ENCODE measurements at regions of chr14 and their contacts with region 1.

Region 1: GRCh38 chr14:55051426-55052268 is at the start of gene MAPK1IP1L:
- DNase-seq: peak; percentile 63
- ATAC-seq: peak; percentile 93
- H3K4me3 ChIP-seq: peak within 1 kb of the TSS; percentile 82
- H3K27ac ChIP-seq: peak within 1 kb of the TSS; percentile 99
- H3K4me1 ChIP-seq: no peaks in the 10 kb centered on the region; the same call in 1 of the 2 replicates
- H3K27me3 ChIP-seq: no peaks in the 10 kb centered on the region
- CTCF ChIP-seq: peak; percentile 96 to 99 (median 99); a peak in 5 of 6 replicates
- EP300 ChIP-seq: peak; percentile 37 to 41; a peak in 2 of 4 replicates
- POLR2A ChIP-seq: peak; percentile 100
- RAD21 ChIP-seq: peak; percentile 68
- polyA plus RNA-seq, gene MAPK1IP1L: 55.7 to 66.0 TPM

Region 2: GRCh38 chr14:54955143-54955542 is 96.5 kb before region 1 on chr14:
- CTCF ChIA-PET with region 1: no interaction called
- POLR2A ChIA-PET with region 1: no interaction called
- RAD21 ChIA-PET with region 1: no interaction called
- SMC1A ChIA-PET with region 1: no interaction called
- in situ Hi-C with region 1: no loop called
- intact Hi-C with region 1: no loop called
- DNase-seq: no peak
- ATAC-seq: no peak
- H3K4me3 ChIP-seq: no peak overlapping the region
- H3K27ac ChIP-seq: no peak overlapping the region
- H3K4me1 ChIP-seq: no peaks in the 10 kb centered on the region
- H3K27me3 ChIP-seq: no peaks in the 10 kb centered on the region
- CTCF ChIP-seq: no peak
- EP300 ChIP-seq: no peak
- POLR2A ChIP-seq: no peak
- RAD21 ChIP-seq: no peak

Region 3: DNA sequence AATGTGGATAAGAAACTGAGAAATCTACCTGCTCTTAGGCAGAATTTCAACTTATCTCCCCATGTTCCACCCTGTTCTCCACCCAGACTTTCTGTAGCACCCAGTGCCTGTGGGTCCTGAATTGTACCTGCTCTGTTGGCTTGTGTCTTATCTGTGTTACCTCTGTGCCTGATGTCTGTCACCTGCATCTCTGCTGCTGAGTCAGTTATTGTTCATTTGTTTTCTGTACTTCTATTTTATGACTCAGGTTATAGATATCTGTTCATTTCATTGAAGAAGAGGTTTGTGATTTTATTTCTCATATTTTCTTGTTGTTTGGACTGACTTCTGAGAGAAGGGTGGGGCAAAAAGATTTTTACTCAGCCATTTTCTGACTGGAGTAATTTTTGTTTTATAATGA is 12.9 kb before region 1 on chr14:
- CTCF ChIA-PET with region 1: interaction called, 11 read pairs
- POLR2A ChIA-PET with region 1: interaction called, 6 read pairs
- RAD21 ChIA-PET with region 1: interaction called, 3 read pairs
- SMC1A ChIA-PET with region 1: interaction called, 4 read pairs
- in situ Hi-C with region 1: no loop called
- intact Hi-C with region 1: no loop called
- DNase-seq: no peak
- ATAC-seq: peak; percentile 19; the same call in 1 of the 3 replicates
- H3K4me3 ChIP-seq: no peak overlapping the region
- H3K27ac ChIP-seq: no peak overlapping the region
- H3K4me1 ChIP-seq: no peaks in the 10 kb centered on the region
- H3K27me3 ChIP-seq: no peaks in the 10 kb centered on the region
- CTCF ChIP-seq: no peak
- EP300 ChIP-seq: no peak
- POLR2A ChIP-seq: no peak
- RAD21 ChIP-seq: no peak

Region 4: DNA sequence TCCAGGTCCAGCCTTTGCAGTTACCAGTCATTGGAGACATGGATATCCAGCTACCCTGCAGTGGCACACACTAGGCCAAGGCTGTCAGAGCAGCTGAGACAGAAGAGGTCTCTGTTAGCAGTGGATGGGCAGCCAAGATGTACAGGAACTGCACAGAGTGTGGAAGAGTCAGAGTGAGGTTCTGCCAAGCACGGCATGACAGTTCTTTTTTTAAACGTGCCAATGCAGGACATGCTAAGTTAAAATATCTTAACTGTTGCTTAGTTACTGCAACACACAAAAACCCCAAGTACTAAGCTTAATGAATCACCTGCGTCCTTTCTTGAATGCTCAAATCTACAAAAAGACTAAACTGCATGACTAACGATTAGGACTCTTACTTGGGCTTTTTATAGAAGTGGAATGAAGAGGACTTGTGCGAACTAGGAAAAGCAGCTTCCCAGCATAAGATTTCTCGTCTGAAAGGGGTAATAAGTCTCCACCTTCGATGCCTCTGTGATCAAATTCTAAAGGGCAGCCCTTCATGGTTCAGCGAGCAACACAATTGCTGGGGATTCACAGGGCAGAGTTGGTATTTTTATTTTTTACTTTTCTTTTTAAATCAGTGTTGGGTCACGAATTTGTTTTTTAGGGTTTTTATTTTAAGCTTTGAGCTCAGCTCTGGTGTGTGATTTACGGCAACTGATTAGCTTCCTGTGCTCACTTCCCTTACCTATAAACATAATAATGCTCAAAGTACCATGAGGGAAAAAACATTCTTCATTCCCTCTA is 20.4 kb after region 1 on chr14:
- CTCF ChIA-PET with region 1: interaction called, 30 read pairs
- POLR2A ChIA-PET with region 1: interaction called, 48 read pairs
- RAD21 ChIA-PET with region 1: interaction called, 49 read pairs
- SMC1A ChIA-PET with region 1: interaction called, 98 read pairs
- in situ Hi-C with region 1: no loop called
- intact Hi-C with region 1: loop called (anchors 2 kb)
- DNase-seq: peak; percentile 92
- ATAC-seq: peak; percentile 76
- H3K4me3 ChIP-seq: 0 out of 2 replicates have a peak overlapping the region, but pooled peaks have one; percentile 28
- H3K27ac ChIP-seq: peak overlapping the region; percentile 82
- H3K4me1 ChIP-seq: peaks cover 54% of the 10 kb centered on the region
- H3K27me3 ChIP-seq: no peaks in the 10 kb centered on the region
- CTCF ChIP-seq: no peak
- EP300 ChIP-seq: peak in 1 of 2 experiments; percentile 51; a peak in 2 of 4 replicates
- POLR2A ChIP-seq: peak; percentile 50; the same call in 1 of the 2 replicates
- RAD21 ChIP-seq: no peak

Region 5: GRCh38 chr14:55085060-55085660 is 33.5 kb after region 1 on chr14:
- CTCF ChIA-PET with region 1: interaction called, 10 read pairs
- POLR2A ChIA-PET with region 1: interaction called, 4 read pairs
- RAD21 ChIA-PET with region 1: interaction called, 13 read pairs
- SMC1A ChIA-PET with region 1: interaction called, 20 read pairs
- in situ Hi-C with region 1: no loop called
- intact Hi-C with region 1: no loop called
- DNase-seq: no peak
- ATAC-seq: no peak
- H3K4me3 ChIP-seq: no peak overlapping the region
- H3K27ac ChIP-seq: no peak overlapping the region
- H3K4me1 ChIP-seq: 0 out of 2 replicates have a peak, but pooled peaks cover under 1% of the 10 kb centered on the region
- H3K27me3 ChIP-seq: no peaks in the 10 kb centered on the region
- CTCF ChIP-seq: no peak
- EP300 ChIP-seq: no peak
- POLR2A ChIP-seq: no peak
- RAD21 ChIP-seq: no peak

Region 6: DNA sequence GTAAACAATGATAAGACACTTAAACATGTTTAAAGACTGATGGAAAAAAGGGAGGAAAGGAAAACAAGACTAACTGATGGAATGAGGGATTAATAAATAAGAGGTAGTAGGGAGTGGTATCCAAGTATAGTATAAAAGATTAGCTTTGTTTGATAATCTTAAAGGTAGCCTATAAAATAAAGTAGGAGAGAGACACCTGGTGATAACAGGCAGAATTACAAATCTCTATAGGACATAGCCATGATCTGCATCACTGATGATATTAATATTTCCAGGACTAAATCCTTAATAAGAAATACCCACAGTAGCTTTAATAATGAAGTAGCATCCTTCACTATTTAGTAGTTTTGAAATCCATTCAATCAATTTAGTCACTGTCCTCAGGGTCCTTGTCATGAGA is 109.3 kb after region 1 on chr14:
- CTCF ChIA-PET with region 1: interaction called, 44 read pairs
- POLR2A ChIA-PET with region 1: no interaction called
- RAD21 ChIA-PET with region 1: interaction called, 24 read pairs
- SMC1A ChIA-PET with region 1: interaction called, 18 read pairs
- in situ Hi-C with region 1: no loop called
- intact Hi-C with region 1: no loop called
- DNase-seq: no peak
- ATAC-seq: peak; percentile 65
- H3K4me3 ChIP-seq: no peak overlapping the region
- H3K27ac ChIP-seq: no peak overlapping the region
- H3K4me1 ChIP-seq: no peaks in the 10 kb centered on the region
- H3K27me3 ChIP-seq: no peaks in the 10 kb centered on the region
- CTCF ChIP-seq: peak; percentile 32 to 67 (median 38); a peak in 5 of 6 replicates
- EP300 ChIP-seq: no peak
- POLR2A ChIP-seq: no peak
- RAD21 ChIP-seq: peak; percentile 64

Region 7: GRCh38 chr14:55245657-55246268 is 194.1 kb after region 1 on chr14:
- CTCF ChIA-PET with region 1: no interaction called
- POLR2A ChIA-PET with region 1: no interaction called
- RAD21 ChIA-PET with region 1: no interaction called
- SMC1A ChIA-PET with region 1: no interaction called
- in situ Hi-C with region 1: no loop called
- intact Hi-C with region 1: no loop called
- DNase-seq: no peak
- ATAC-seq: peak; percentile 83
- H3K4me3 ChIP-seq: no peak overlapping the region
- H3K27ac ChIP-seq: no peak overlapping the region
- H3K4me1 ChIP-seq: no peaks in the 10 kb centered on the region
- H3K27me3 ChIP-seq: no peaks in the 10 kb centered on the region
- CTCF ChIP-seq: peak; percentile 57 to 68 (median 64); a peak in 5 of 6 replicates
- EP300 ChIP-seq: no peak
- POLR2A ChIP-seq: no peak
- RAD21 ChIP-seq: peak; percentile 68